Mammary epithelial cell (primary cell): ENCODE measurements at regions of chr17 and their contacts with region 1.

Region 1: DNA sequence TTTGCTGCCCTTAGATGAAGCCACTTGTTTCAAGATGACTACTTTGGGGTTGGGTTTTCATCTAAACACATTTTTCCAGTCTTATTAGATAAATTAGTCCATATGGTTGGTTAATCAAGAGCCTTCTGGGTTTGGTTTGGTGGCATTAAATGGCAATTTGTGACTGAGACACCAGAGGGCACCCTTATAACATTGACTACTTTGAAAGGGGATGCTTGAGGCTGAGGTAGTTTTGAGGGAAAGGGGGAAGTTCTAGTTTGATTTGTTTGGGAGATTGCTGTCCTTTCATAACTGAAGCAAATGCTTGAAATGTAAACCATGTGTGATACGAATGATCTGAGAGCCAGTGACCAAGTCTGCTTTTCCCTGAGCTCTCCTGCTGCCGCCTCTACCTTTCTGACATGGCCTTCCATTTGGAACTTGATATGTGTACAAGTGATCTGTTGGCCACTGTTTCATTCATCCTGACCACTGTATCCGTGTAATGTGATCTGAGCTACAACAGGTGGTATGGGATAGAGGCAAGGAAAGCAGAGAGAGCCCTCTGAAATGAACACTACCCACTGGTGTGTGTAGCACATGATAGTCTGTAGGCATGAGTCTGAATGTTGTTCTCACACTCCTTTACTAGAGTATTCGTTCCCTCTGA is 5.8 kb upstream of the RARA start:
- DNase-seq: peak; percentile 45
- H3K4me3 ChIP-seq: no peak overlapping the region
- H3K27ac ChIP-seq: no peak overlapping the region
- H3K4me1 ChIP-seq: peaks cover 26% of the 10 kb centered on the region
- H3K27me3 ChIP-seq: no peaks in the 10 kb centered on the region
- CTCF ChIP-seq: peak; percentile 52 to 77

Region 2: GRCh38 chr17:40191237-40192208 is 111.6 kb before region 1 on chr17:
- CTCF ChIA-PET with region 1: no interaction called
- dilution Hi-C with region 1: loop called (anchors 5 kb)
- in situ Hi-C with region 1: no loop called
- intact Hi-C with region 1: no loop called
- DNase-seq: peak; percentile 75
- H3K4me3 ChIP-seq: peak overlapping the region in 2 of 3 experiments; percentile 37 to 41
- H3K27ac ChIP-seq: no peak overlapping the region
- H3K4me1 ChIP-seq: peaks cover 24% of the 10 kb centered on the region
- H3K27me3 ChIP-seq: no peaks in the 10 kb centered on the region
- CTCF ChIP-seq: peak; percentile 66 to 81

Region 3: DNA sequence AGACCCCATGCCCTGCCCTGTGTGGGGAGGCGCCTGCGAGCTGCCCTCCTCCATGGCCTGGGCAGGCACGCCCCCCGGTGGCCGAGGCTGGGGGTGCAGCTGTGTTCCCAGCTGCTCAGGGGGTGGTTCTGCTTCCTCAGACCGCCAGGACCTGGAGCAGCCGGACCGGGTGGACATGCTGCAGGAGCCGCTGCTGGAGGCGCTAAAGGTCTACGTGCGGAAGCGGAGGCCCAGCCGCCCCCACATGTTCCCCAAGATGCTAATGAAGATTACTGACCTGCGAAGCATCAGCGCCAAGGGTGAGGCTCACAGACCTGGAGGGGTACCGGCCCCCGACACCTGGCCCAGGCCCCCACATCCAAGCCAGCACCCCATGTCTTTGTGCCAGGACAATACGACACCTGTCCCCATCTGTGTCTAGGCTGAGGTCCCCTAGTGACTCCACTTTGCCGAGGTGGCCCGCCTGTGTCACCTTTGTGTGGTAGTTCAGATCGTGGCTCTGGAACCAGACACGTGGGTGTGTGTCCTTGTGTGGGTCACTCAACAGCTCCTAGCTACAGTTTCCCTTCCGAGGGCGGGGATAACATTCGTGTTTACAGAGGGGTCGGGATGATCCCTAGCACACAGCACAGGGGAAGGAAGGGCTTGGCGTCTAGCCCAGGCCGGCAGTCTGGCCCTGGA is 52.1 kb after region 1 on chr17:
- CTCF ChIA-PET with region 1: interaction called, 13 read pairs
- dilution Hi-C with region 1: loop called (anchors 5 kb)
- in situ Hi-C with region 1: loop called in 1 of 2 experiments (anchors 5 kb)
- intact Hi-C with region 1: loop called (anchors 1 kb)
- DNase-seq: no peak
- H3K4me3 ChIP-seq: no peak overlapping the region
- H3K27ac ChIP-seq: no peak overlapping the region
- H3K4me1 ChIP-seq: peaks cover 5% of the 10 kb centered on the region
- H3K27me3 ChIP-seq: no peaks in the 10 kb centered on the region
- CTCF ChIP-seq: peak; percentile 72 to 92

Region 4: GRCh38 chr17:40417609-40418427 is 114.7 kb after region 1 on chr17 and contains the start of gene TOP2A:
- CTCF ChIA-PET with region 1: no interaction called
- dilution Hi-C with region 1: no loop called
- in situ Hi-C with region 1: loop called in 1 of 2 experiments (anchors 10 kb)
- intact Hi-C with region 1: loop called (anchors 1 kb)
- DNase-seq: peak; percentile 100
- H3K4me3 ChIP-seq: peak within 1 kb of the TSS; percentile 81 to 98 (median 89)
- H3K27ac ChIP-seq: peak within 1 kb of the TSS; percentile 74
- H3K4me1 ChIP-seq: peaks cover 15% of the 10 kb centered on the region
- H3K27me3 ChIP-seq: no peaks in the 10 kb centered on the region
- CTCF ChIP-seq: no peak
- total RNA-seq, gene TOP2A: 3.2 to 93.3 TPM

Region 5: GRCh38 chr17:40588552-40588951 is 285.4 kb after region 1 on chr17:
- CTCF ChIA-PET with region 1: no interaction called
- dilution Hi-C with region 1: no loop called
- in situ Hi-C with region 1: no loop called
- intact Hi-C with region 1: no loop called
- DNase-seq: no peak
- H3K4me3 ChIP-seq: no peak overlapping the region
- H3K27ac ChIP-seq: no peak overlapping the region
- H3K4me1 ChIP-seq: no peaks in the 10 kb centered on the region
- H3K27me3 ChIP-seq: peaks cover 3% of the 10 kb centered on the region
- CTCF ChIP-seq: no peak

Region 6: DNA sequence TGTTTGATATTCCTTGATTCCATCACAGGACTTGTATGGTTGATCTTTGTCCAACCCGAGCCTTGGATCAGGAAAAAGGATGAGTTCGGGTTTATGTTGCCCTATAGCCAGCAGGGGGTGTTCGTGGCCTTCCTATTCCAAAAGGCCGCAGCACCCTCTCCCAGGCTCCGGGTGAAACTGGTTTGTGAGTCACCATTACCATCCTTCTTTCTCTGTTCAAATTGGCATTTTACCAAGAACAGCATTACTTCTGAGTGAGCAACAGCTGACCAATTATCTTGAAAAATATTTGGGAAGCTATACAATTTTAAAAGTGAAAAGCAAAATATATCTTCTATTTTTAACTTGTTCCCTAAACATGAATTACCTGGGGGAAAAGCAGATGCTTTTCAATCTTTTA is 606.2 kb after region 1 on chr17:
- CTCF ChIA-PET with region 1: no interaction called
- dilution Hi-C with region 1: no loop called
- in situ Hi-C with region 1: no loop called
- intact Hi-C with region 1: no loop called
- DNase-seq: peak; percentile 96
- H3K4me3 ChIP-seq: no peak overlapping the region
- H3K27ac ChIP-seq: peak overlapping the region; percentile 98
- H3K4me1 ChIP-seq: peaks cover 47% of the 10 kb centered on the region
- H3K27me3 ChIP-seq: no peaks in the 10 kb centered on the region
- CTCF ChIP-seq: peak; percentile 76 to 84